ENCODE measurements at regions of chr3 and their contacts with region 1.

Region 1: GRCh38 chr3:184314700-184315542 is 515 bp downstream of the EIF4G1 start:
- DNase-seq: peak; percentile 74 to 92 (median 88)
- H3K4me3 ChIP-seq: peak overlapping the region; percentile 35 to 85 (median 70)
- H3K27ac ChIP-seq: peak overlapping the region; percentile 86 to 95
- H3K4me1 ChIP-seq: peaks cover 0 to 45% (median 35%) of the 10 kb centered on the region in 4 experiments
- H3K27me3 ChIP-seq: no peaks in the 10 kb centered on the region

Region 2: DNA sequence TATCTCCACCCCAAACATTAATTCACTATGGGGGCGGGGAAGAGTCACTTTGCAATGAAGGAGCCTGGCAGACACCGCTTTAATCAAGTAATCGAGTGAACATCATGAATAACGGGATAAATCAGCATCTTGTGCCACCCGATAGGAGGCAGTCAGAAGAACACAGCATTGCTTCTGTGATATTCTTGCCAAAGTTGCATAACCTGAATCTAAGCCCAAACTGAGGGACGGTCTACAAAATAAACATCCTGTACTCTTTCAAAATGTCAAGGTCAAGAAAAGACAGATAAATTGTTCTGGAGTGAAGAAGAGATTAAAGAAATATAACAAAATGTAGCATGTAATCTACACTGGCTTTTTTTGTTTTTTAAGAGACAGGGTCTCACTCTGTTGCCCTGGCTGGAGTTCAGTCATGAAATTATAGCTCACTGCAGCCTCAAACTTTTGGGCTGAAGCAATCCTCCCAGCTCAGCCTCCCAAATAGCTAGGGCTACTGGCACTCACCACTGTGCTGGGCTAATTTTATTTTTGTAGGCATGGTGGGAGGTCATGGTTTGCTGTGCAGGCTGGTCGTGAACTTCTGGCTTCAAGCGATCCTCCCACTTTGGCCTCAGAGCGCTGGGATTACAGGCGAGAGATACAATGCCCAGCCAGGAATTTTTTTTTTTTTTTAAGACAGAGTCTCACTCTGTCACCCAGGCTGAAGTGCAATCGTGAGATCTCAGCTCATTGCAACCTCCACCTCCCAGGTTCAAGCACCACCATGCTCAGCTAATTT is 105.6 kb before region 1 on chr3:
- CTCF ChIA-PET with region 1: no interaction called
- POLR2A ChIA-PET with region 1: no interaction called
- DNase-seq: no peak
- H3K4me3 ChIP-seq: no peak overlapping the region
- H3K27ac ChIP-seq: no peak overlapping the region
- H3K4me1 ChIP-seq: no peaks in the 10 kb centered on the region
- H3K27me3 ChIP-seq: peaks cover 2 to 12% (median 3%) of the 10 kb centered on the region in 5 experiments

Region 3: DNA sequence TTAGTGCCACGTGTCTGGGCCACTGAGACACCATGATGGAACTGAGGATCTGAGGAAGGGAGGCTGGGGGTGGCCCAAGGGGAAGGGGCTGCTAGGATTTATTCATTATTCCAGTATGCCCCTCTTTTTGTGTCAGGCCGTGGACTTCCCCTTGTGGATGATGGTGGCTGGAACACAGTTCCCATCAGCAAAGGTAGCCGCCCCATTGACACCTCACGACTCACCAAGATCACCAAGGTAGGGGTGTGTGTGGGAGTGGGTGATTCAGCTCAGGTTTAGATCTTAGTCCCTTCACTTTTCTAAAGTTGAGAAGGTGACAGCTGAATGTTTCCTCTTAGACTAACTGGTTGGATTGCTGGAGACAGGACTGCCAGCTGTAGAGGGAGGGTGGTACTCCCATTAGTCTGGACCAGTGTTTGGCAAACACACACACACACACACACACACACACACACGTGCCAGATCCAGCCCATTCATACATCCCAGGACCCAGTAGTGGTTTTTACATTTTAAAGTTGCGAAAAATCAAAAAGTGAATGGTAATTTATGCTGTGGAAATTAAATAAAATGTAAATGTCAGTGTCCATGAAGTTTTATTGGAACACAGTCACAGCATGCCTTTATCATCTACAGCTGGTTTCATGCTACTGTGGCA is 10.9 kb after region 1 on chr3:
- CTCF ChIA-PET with region 1: interaction called, 13 read pairs
- POLR2A ChIA-PET with region 1: interaction called, 3 read pairs
- DNase-seq: no peak
- H3K4me3 ChIP-seq: no peak overlapping the region
- H3K27ac ChIP-seq: no peak overlapping the region
- H3K4me1 ChIP-seq: no peaks in the 10 kb centered on the region
- H3K27me3 ChIP-seq: no peaks in the 10 kb centered on the region

Region 4: GRCh38 chr3:184345317-184346144 is 30.6 kb after region 1 on chr3:
- CTCF ChIA-PET with region 1: no interaction called
- POLR2A ChIA-PET with region 1: no interaction called
- DNase-seq: peak in 2 of 3 donors; percentile 57 to 70
- H3K4me3 ChIP-seq: no peak overlapping the region
- H3K27ac ChIP-seq: no peak overlapping the region
- H3K4me1 ChIP-seq: peaks cover 0 to 30% (median 11%) of the 10 kb centered on the region in 4 experiments
- H3K27me3 ChIP-seq: no peaks in the 10 kb centered on the region

Measured in common myeloid progenitor, CD34-positive (primary cell).